ENCODE measurements at regions of chr2 and their contacts with region 1.

Region 1: GRCh38 chr2:157777427-157777826 is 98.7 kb downstream of the ACVR1 start:
- DNase-seq: peak in 7 of 9 donors; percentile 12 to 57 (median 43)
- ATAC-seq: peak; percentile 57
- H3K4me3 ChIP-seq: no peak overlapping the region
- H3K4me3 Mint-ChIP-seq: no peak overlapping the region
- H3K27ac ChIP-seq: no peak overlapping the region
- H3K27ac Mint-ChIP-seq: no peak overlapping the region
- H3K4me1 ChIP-seq: peaks cover 0 to 3% of the 10 kb centered on the region in 2 donors
- H3K4me1 Mint-ChIP-seq: peaks cover 0 to 17% (median 13%) of the 10 kb centered on the region in 7 donors
- H3K27me3 ChIP-seq: no peaks in the 10 kb centered on the region
- H3K27me3 Mint-ChIP-seq: no peaks in the 10 kb centered on the region

Region 2: DNA sequence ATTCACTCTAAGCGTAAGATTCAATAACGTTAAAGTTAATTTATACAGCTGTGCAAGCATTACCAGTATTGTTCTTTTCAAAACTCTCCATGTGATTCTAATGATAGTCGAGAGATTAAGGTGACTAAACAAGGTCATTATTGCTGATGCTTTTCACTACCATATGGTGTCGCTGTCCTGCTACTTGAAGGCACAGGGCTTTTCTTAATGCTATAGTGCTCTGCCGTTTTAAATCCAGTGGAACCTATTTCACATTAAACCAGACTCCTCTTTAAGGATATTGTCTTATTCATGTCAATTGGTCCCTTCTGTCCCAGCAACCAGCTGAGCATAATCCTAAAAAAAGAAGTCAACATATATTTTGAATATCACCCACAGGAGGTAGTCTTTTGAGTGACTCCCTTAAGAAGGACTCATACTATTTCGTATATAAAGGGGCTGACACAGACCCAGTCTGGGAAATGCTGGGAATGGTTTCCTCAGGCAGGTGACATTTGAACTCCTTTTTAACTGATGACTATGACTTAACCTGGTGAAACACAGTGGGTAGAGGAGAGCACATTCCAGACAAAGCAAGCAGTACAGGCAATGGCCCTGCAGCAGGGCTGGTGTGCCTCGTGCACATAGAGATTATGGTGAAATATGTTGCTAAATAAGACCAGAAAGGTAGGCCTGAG is 279.7 kb before region 1 on chr2:
- CTCF ChIA-PET with region 1: interaction called, 3 read pairs
- POLR2A ChIA-PET with region 1: no interaction called
- intact Hi-C with region 1: loop called (anchors 2 to 5 kb)
- DNase-seq: peak in 7 of 9 donors; percentile 13 to 61 (median 49)
- ATAC-seq: peak; percentile 94
- H3K4me3 ChIP-seq: no peak overlapping the region
- H3K4me3 Mint-ChIP-seq: no peak overlapping the region
- H3K27ac ChIP-seq: no peak overlapping the region
- H3K27ac Mint-ChIP-seq: peak overlapping the region in 1 of 9 donors; percentile 29
- H3K4me1 ChIP-seq: peaks cover 0 to 8% of the 10 kb centered on the region in 2 donors
- H3K4me1 Mint-ChIP-seq: peaks cover 8 to 40% (median 37%) of the 10 kb centered on the region in 7 donors
- H3K27me3 ChIP-seq: no peaks in the 10 kb centered on the region
- H3K27me3 Mint-ChIP-seq: no peaks in the 10 kb centered on the region

Region 3: GRCh38 chr2:157989227-157989626 is 211.8 kb after region 1 on chr2:
- CTCF ChIA-PET with region 1: interaction called, 5 read pairs
- POLR2A ChIA-PET with region 1: no interaction called
- intact Hi-C with region 1: loop called in 1 of 2 experiments (anchors 1 kb)
- DNase-seq: no peak
- ATAC-seq: no peak
- H3K4me3 ChIP-seq: no peak overlapping the region
- H3K4me3 Mint-ChIP-seq: no peak overlapping the region
- H3K27ac ChIP-seq: no peak overlapping the region
- H3K27ac Mint-ChIP-seq: no peak overlapping the region
- H3K4me1 ChIP-seq: no peaks in the 10 kb centered on the region
- H3K4me1 Mint-ChIP-seq: no peaks in the 10 kb centered on the region
- H3K27me3 ChIP-seq: no peaks in the 10 kb centered on the region
- H3K27me3 Mint-ChIP-seq: peaks cover 0 to 13% (median 5%) of the 10 kb centered on the region in 5 donors

Measured in naive thymus-derived CD4-positive, alpha-beta T cell (primary cell).